Right cardiac atrium (tissue), 5 donors: ENCODE measurements at regions of chr7 and their contacts with region 1.

Region 1: DNA sequence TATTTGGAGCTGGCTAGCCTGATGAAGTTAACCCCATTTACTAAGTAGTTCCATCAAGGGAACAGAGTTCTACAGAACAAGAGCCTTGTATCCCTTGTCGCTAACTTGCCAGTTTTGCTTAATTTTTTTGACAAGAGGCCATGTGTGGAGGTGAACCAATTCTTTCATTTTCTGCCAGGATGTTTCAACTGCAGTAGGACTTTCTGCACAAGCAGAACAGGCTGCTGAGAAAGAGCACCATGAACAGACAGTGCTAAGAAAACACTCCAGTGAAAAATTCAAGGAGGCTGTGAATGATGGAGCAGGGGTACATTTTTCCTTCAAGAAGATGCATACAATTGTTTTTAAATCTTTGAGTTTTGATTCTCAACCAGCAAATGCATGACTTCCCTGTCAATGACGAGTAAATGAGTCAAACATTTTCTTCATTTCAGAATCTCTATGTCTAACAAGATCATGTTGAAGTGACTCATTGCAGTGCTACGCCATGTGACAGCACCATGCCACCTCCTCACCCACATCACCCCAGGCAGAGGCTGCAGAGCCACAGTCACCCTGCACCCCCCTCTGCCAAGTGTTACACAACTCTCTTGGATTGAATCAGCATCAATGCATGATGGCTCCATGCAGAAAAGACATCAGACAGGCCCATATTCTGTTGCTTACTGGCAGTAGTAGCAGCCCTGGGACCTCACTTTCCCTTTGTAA is 193.1 kb downstream of the COBL start:
- DNase-seq: peak in 1 of 3 donors; percentile 36
- ATAC-seq: peak; percentile 47 to 75
- H3K4me3 ChIP-seq: no peak overlapping the region
- H3K27ac ChIP-seq: peak overlapping the region; percentile 6
- H3K4me1 ChIP-seq: peaks cover 2% of the 10 kb centered on the region
- H3K27me3 ChIP-seq: no peaks in the 10 kb centered on the region

Region 2: GRCh38 chr7:50793115-50793946 is 330.1 kb before region 1 on chr7:
- intact Hi-C with region 1: loop called in 1 of 4 experiments (anchors 10 kb)
- DNase-seq: peak; percentile 80 to 92 (median 92)
- ATAC-seq: peak; percentile 89 to 90
- H3K4me3 ChIP-seq: peak overlapping the region; percentile 90
- H3K27ac ChIP-seq: peak overlapping the region; percentile 97
- H3K4me1 ChIP-seq: peaks cover 6% of the 10 kb centered on the region
- H3K27me3 ChIP-seq: no peaks in the 10 kb centered on the region

Region 3: DNA sequence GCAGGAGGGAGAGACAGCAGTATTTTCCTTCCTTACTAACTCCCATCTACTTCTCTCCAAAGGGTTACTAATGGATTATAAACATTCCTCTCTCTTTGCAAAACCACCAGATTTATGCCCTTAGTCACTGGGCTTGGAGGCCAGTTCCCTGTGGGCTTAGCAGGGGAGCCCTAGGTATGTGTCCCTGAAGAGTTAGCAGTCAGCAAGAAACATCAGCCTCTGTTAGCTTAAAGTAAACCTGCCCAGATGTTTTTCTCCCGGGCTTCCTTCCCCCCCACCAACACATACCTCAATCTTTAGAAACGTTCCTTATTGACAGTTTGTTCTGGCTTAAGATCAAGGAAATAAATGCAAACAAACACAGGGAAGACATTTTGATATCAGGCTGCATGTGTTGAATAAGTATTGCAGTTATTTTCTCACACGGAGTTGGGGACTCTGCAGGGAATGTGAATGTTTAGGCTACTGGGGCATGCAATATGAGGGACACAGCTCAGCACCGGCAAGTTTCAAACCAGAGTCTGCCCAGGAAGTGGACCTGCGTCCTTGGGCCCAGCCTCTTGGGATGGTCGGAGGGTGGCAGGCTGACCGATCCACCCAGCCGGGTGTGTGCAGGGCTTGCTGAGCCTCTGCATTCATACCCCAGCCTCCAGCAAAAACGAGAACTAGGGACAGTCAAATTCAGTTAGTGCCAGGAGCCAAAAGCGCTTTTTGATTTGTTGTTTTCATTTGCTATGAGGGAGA is 88.8 kb before region 1 on chr7:
- intact Hi-C with region 1: no loop called
- DNase-seq: no peak
- ATAC-seq: peak in 1 of 2 donors; percentile 41
- H3K4me3 ChIP-seq: no peak overlapping the region
- H3K27ac ChIP-seq: no peak overlapping the region
- H3K4me1 ChIP-seq: no peaks in the 10 kb centered on the region
- H3K27me3 ChIP-seq: no peaks in the 10 kb centered on the region